H1 (cell line): ENCODE measurements at regions of chr9 and their contacts with region 1.

Region 1: DNA sequence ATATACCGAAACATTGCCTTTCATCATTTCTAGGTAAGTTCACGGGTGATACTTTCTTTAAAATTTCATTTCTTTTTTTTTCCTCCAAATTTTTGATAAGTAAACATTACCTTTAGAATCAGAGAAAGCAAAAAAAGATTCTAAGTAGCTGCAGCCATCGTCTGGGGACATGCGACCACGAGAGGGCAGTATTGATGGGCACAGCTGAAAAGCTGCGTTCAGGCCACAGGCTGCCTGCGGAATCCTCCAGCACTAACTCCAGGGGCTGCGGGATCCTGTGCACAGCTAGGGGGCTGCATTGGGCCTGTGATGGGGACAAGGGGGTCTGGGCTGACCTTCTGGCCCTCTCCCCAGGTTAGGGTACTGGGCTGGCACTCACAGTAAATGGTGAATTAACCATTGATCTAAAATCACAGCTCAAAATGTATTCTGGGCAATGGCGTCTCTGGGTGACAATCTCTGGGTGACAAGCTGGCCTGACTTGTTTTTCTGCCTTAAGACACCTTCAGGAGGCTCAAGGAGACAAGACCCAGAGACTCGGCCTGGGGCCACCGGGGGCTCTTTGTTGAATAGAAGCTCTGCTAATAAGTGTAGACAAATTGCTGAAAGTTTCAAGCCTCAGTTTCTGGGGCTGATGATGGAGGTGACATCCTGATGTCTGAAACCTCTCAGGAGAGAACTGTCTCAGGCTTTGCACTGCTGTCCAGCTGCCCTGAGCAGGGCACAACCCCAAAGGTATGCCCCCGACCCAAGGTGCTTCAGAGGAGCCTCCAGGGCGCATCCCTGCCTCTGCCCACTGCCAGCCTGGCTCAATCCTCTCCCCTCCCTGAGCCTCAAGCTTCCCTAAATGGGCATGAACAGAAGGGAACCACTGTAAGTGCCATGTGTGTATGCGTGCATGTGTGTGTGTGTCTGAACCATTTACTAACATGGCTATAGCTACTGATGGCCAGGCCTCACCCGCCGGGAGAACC is 44.3 kb upstream of the SARDH start:
- DNase-seq: peak in 1 of 2 experiments; percentile 84
- H3K4me3 ChIP-seq: no peak overlapping the region
- H3K27ac ChIP-seq: no peak overlapping the region
- H3K4me1 ChIP-seq: no peaks in the 10 kb centered on the region
- H3K27me3 ChIP-seq: no peaks in the 10 kb centered on the region
- CTCF ChIP-seq: peak in 2 of 3 experiments; percentile 89; a peak in 3 of 4 replicates
- EP300 ChIP-seq: no peak
- POLR2A ChIP-seq: no peak
- RAD21 ChIP-seq: peak; percentile 79 to 80

Region 2: DNA sequence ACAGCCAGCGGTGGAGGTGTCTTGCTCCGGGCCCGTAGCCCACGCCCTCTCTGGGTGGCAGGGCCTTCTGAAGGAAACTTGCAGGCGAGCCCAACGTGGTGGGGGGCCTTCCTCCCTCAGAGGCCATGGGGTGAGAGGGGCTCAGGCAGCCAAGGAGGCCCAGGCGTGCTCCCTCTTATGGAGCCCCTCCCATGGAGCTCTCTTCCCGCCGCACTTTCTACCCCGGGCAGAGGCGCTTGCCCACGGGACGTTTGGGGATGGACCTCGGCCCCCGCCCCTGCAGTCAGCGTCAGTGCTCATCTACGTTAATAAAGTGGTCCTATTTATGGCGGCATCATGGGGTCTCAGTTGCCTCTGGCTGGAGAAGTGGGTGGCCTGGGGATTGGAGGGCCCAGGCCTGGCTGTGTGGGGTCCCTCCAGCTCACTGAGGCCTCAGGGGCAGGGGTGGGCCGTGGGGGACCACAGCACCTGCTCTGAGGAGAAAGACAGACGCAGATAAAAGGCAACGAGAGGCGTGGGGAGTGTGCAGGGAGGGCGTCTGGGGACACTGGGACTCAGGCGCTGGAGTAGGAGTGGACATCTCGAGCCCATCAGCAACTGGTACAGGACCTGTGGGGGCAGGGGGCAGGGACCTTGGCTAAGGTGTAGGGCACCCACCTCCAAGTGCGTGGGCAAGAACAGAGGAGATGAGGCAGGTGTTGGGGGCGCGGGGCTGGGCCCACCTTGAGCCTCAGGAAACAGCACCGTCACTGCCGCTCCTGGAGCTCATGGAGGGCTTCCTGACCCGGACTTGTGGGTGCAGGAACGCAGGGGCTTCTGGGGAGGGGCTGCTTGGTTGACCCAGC is 207.0 kb before region 1 on chr9:
- CTCF ChIA-PET with region 1: no interaction called
- POLR2A ChIA-PET with region 1: no interaction called
- DNase-seq: no peak
- H3K4me3 ChIP-seq: no peak overlapping the region
- H3K27ac ChIP-seq: no peak overlapping the region
- H3K4me1 ChIP-seq: peaks cover 0 to 8% (median 1%) of the 10 kb centered on the region in 4 experiments; a peak in 5 of 7 replicates
- H3K27me3 ChIP-seq: 0 out of 7 replicates have a peak, but pooled peaks cover 0 to 2% (median 0%) of the 10 kb centered on the region in 4 experiments
- CTCF ChIP-seq: no peak
- EP300 ChIP-seq: no peak
- POLR2A ChIP-seq: no peak
- RAD21 ChIP-seq: no peak

Region 3: DNA sequence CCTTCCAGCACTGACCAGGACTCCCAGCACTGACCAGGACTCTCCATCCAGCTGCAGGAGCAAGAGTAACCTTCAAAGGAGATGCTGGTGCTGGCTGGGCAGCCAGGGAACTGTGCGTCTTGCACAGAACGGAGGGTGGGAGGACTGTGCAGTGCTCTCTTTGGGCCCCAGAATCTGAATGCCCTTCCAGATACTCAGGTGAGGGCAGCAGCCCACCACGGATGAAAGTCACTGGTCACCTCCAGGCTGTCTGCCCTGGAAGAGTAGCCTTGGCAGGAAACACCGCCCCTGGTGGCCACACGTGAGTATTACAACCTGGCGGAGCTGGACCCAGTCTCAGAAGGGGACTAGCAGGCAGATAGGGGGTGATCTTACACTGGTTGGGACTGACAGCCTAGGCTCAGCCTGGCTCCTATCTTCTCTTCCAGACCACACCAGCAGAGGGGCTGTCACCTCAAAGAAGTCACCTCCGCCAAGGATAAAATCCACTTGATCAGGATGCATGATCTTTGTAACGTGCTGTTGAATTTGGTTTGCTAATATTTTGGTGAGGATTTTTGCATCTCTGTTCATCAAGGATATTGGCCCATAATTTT is 39.5 kb before region 1 on chr9:
- CTCF ChIA-PET with region 1: interaction called, 44 read pairs
- POLR2A ChIA-PET with region 1: no interaction called
- DNase-seq: peak; percentile 84 to 99
- H3K4me3 ChIP-seq: no peak overlapping the region
- H3K27ac ChIP-seq: no peak overlapping the region
- H3K4me1 ChIP-seq: peaks cover 0 to 10% (median 5%) of the 10 kb centered on the region in 4 experiments; a peak in 6 of 7 replicates
- H3K27me3 ChIP-seq: no peaks in the 10 kb centered on the region
- CTCF ChIP-seq: peak in 2 of 3 experiments; percentile 99 to 100; a peak in 3 of 4 replicates
- EP300 ChIP-seq: no peak
- POLR2A ChIP-seq: no peak
- RAD21 ChIP-seq: peak; percentile 79 to 88

Region 4: GRCh38 chr9:133768859-133769425 is 13.5 kb before region 1 on chr9:
- CTCF ChIA-PET with region 1: interaction called, 65 read pairs
- POLR2A ChIA-PET with region 1: no interaction called
- DNase-seq: peak in 1 of 2 experiments; percentile 63
- H3K4me3 ChIP-seq: no peak overlapping the region
- H3K27ac ChIP-seq: no peak overlapping the region
- H3K4me1 ChIP-seq: no peaks in the 10 kb centered on the region
- H3K27me3 ChIP-seq: no peaks in the 10 kb centered on the region
- CTCF ChIP-seq: peak; percentile 49 to 67 (median 65)
- EP300 ChIP-seq: no peak
- POLR2A ChIP-seq: no peak
- RAD21 ChIP-seq: peak; percentile 58 to 62

Region 5: DNA sequence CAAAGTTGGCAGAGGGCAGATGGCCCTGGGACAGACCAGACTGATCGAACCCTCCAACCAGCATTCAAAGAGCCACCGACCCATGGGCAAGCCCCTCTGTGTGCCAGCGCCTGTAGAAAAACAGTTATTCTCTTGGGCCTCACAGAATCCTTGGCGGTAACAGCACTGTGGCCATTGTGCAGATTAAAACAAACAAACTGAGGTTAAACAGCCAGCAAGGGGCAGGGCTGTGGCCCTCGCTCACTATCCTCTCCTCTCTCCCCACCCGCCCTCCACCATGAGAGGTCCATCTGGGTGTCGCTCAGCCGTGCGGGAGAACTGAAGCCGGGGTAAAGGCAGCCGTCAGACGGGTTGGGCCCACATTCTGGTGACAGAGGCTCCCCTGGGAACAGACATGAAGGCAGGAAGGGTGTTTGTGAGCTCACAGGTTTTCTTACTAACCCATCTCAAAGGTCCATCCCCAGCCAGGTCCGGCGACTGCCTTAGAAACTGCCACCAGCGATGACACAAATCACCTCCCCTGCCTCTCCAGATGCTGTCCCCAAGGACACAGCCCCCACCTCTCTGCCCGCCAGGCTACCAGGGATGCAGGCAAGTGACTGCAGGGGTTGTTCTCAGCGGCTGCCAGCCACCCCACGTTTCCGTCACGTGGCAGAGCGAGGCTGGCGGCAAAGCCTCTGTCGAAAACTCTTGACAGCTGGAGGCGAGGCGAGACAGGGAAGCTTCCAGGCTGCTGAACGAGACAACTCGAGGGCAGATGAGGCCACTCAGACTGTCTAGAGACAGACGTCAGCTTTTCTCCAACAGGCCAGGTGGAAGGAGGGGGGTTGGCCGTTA is 31.5 kb after region 1 on chr9:
- CTCF ChIA-PET with region 1: interaction called, 10 read pairs
- POLR2A ChIA-PET with region 1: interaction called, 3 read pairs
- DNase-seq: no peak
- H3K4me3 ChIP-seq: no peak overlapping the region
- H3K27ac ChIP-seq: no peak overlapping the region
- H3K4me1 ChIP-seq: no peaks in the 10 kb centered on the region
- H3K27me3 ChIP-seq: no peaks in the 10 kb centered on the region
- CTCF ChIP-seq: no peak
- EP300 ChIP-seq: no peak
- POLR2A ChIP-seq: no peak
- RAD21 ChIP-seq: no peak

Region 6: GRCh38 chr9:133839822-133840329 is 57.4 kb after region 1 on chr9:
- CTCF ChIA-PET with region 1: interaction called, 12 read pairs
- POLR2A ChIA-PET with region 1: no interaction called
- DNase-seq: no peak
- H3K4me3 ChIP-seq: no peak overlapping the region
- H3K27ac ChIP-seq: 0 out of 2 replicates have a peak overlapping the region, but pooled peaks have one; percentile 10
- H3K4me1 ChIP-seq: peaks cover 0 to 32% (median 22%) of the 10 kb centered on the region in 4 experiments; a peak in 6 of 7 replicates
- H3K27me3 ChIP-seq: no peaks in the 10 kb centered on the region
- CTCF ChIP-seq: no peak
- EP300 ChIP-seq: no peak
- POLR2A ChIP-seq: no peak
- RAD21 ChIP-seq: no peak

Region 7: DNA sequence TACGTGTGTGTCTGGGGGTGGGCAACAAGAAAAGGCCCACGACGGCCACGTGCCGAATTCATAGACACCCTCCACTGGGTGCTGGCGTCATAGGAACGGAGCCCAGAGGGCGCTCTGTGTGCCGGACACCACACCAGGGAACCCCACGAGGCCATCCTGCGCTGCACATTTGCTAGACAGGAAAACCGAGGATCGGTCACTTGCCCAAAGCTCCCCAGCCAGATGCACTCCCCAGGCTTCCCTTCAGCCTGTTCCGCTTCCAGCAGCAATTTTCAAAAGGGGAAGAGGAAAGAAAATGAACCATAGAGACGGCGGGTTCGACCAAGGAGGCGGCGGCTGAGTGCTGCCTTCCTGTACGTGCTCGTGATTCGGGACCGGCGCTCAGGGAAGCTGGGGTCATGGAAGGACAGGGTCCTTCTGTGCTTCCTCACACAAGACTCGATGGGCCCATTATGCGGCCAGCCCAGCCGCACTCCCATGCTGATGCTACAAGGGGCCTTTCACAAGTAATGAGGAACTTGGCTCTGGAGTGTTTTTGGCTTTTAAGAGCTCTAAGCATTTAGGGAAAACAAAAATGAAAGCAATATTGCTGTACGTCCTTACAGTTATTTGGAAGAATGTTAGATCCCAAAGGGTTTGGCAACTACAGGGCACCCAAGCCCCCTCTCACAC is 80.3 kb after region 1 on chr9:
- CTCF ChIA-PET with region 1: no interaction called
- POLR2A ChIA-PET with region 1: no interaction called
- DNase-seq: no peak
- H3K4me3 ChIP-seq: no peak overlapping the region
- H3K27ac ChIP-seq: no peak overlapping the region
- H3K4me1 ChIP-seq: peaks cover 0 to 19% (median 6%) of the 10 kb centered on the region in 4 experiments; a peak in 4 of 7 replicates
- H3K27me3 ChIP-seq: no peaks in the 10 kb centered on the region
- CTCF ChIP-seq: no peak
- EP300 ChIP-seq: no peak
- POLR2A ChIP-seq: no peak
- RAD21 ChIP-seq: no peak